ENCODE measurements at regions of chr4 and their contacts with region 1.

Region 1: GRCh38 chr4:102036619-102037376 is 246.3 kb downstream of the BANK1 start:
- DNase-seq: no peak
- H3K4me3 ChIP-seq: no peak overlapping the region
- H3K27ac ChIP-seq: no peak overlapping the region
- H3K4me1 ChIP-seq: no peaks in the 10 kb centered on the region
- H3K27me3 ChIP-seq: no peaks in the 10 kb centered on the region
- CTCF ChIP-seq: no peak
- POLR2A ChIP-seq: no peak

Region 2: GRCh38 chr4:100466501-100466900 is 1570.3 kb before region 1 on chr4:
- intact Hi-C with region 1: loop called (anchors 5 kb)
- DNase-seq: no peak
- H3K4me3 ChIP-seq: no peak overlapping the region
- H3K27ac ChIP-seq: no peak overlapping the region
- H3K4me1 ChIP-seq: no peaks in the 10 kb centered on the region
- H3K27me3 ChIP-seq: no peaks in the 10 kb centered on the region
- CTCF ChIP-seq: no peak
- POLR2A ChIP-seq: no peak